ENCODE measurements at regions of chr3 and their contacts with region 1.

Region 1: GRCh38 chr3:45915518-45916231 is 27.6 kb upstream of the CXCR6 start:
- DNase-seq: peak; percentile 93
- H3K4me3 ChIP-seq: no peak overlapping the region
- H3K27ac ChIP-seq: no peak overlapping the region
- H3K4me1 ChIP-seq: peaks cover 19% of the 10 kb centered on the region
- H3K27me3 ChIP-seq: no peaks in the 10 kb centered on the region
- CTCF ChIP-seq: no peak

Region 2: GRCh38 chr3:45760878-45761711 is 154.6 kb before region 1 on chr3:
- CTCF ChIA-PET with region 1: no interaction called
- dilution Hi-C with region 1: no loop called
- in situ Hi-C with region 1: loop called (anchors 10 to 25 kb)
- intact Hi-C with region 1: no loop called
- DNase-seq: peak; percentile 26
- H3K4me3 ChIP-seq: no peak overlapping the region
- H3K27ac ChIP-seq: no peak overlapping the region
- H3K4me1 ChIP-seq: no peaks in the 10 kb centered on the region
- H3K27me3 ChIP-seq: no peaks in the 10 kb centered on the region
- CTCF ChIP-seq: peak; percentile 81 to 90

Region 3: GRCh38 chr3:46674031-46674845 is 758.6 kb after region 1 on chr3:
- CTCF ChIA-PET with region 1: no interaction called
- dilution Hi-C with region 1: no loop called
- in situ Hi-C with region 1: no loop called
- intact Hi-C with region 1: no loop called
- DNase-seq: no peak
- H3K4me3 ChIP-seq: no peak overlapping the region
- H3K27ac ChIP-seq: no peak overlapping the region
- H3K4me1 ChIP-seq: no peaks in the 10 kb centered on the region
- H3K27me3 ChIP-seq: no peaks in the 10 kb centered on the region
- CTCF ChIP-seq: peak in 1 of 2 donors; percentile 21

Measured in mammary epithelial cell (primary cell).